ENCODE measurements at regions of chr13 and their contacts with region 1.

Region 1: GRCh38 chr13:99356158-99357091 is 49.2 kb upstream of the GPR183 start:
- DNase-seq: peak; percentile 88 to 95 (median 92)
- H3K4me3 ChIP-seq: peak overlapping the region; percentile 13 to 37
- H3K4me3 Mint-ChIP-seq: peak overlapping the region; percentile 30 to 82 (median 73)
- H3K27ac ChIP-seq: peak overlapping the region; percentile 94
- H3K27ac Mint-ChIP-seq: peak overlapping the region; percentile 96 to 100 (median 99)
- H3K4me1 ChIP-seq: peaks cover 98% of the 10 kb centered on the region
- H3K4me1 Mint-ChIP-seq: peaks cover 90 to 100% (median 96%) of the 10 kb centered on the region in 4 donors
- H3K27me3 ChIP-seq: no peaks in the 10 kb centered on the region
- H3K27me3 Mint-ChIP-seq: no peaks in the 10 kb centered on the region

Region 2: GRCh38 chr13:99275093-99275469 is 81.3 kb before region 1 on chr13:
- CTCF ChIA-PET with region 1: interaction called, 42 read pairs
- POLR2A ChIA-PET with region 1: interaction called, 55 read pairs
- intact Hi-C with region 1: no loop called
- DNase-seq: peak; percentile 46 to 67 (median 54)
- H3K4me3 ChIP-seq: peak overlapping the region in 1 of 2 donors; percentile 3
- H3K4me3 Mint-ChIP-seq: peak overlapping the region in 7 of 8 donors; percentile 43 to 86 (median 74)
- H3K27ac ChIP-seq: peak overlapping the region; percentile 11
- H3K27ac Mint-ChIP-seq: peak overlapping the region; percentile 80 to 98 (median 94)
- H3K4me1 ChIP-seq: peaks cover 93% of the 10 kb centered on the region
- H3K4me1 Mint-ChIP-seq: peaks cover 79 to 99% (median 89%) of the 10 kb centered on the region in 4 donors
- H3K27me3 ChIP-seq: no peaks in the 10 kb centered on the region
- H3K27me3 Mint-ChIP-seq: no peaks in the 10 kb centered on the region

Region 3: GRCh38 chr13:99296398-99296797 is 60.0 kb before region 1 on chr13:
- CTCF ChIA-PET with region 1: interaction called, 7 read pairs
- POLR2A ChIA-PET with region 1: interaction called, 929 read pairs
- intact Hi-C with region 1: no loop called
- DNase-seq: peak; percentile 46 to 69 (median 59)
- H3K4me3 ChIP-seq: peak overlapping the region in 1 of 2 donors; percentile 8
- H3K4me3 Mint-ChIP-seq: peak overlapping the region; percentile 76 to 87 (median 86)
- H3K27ac ChIP-seq: peak overlapping the region; percentile 66
- H3K27ac Mint-ChIP-seq: peak overlapping the region; percentile 86 to 96 (median 94)
- H3K4me1 ChIP-seq: peaks cover 94% of the 10 kb centered on the region
- H3K4me1 Mint-ChIP-seq: peaks cover 58 to 92% (median 70%) of the 10 kb centered on the region in 4 donors
- H3K27me3 ChIP-seq: no peaks in the 10 kb centered on the region
- H3K27me3 Mint-ChIP-seq: no peaks in the 10 kb centered on the region

Region 4: DNA sequence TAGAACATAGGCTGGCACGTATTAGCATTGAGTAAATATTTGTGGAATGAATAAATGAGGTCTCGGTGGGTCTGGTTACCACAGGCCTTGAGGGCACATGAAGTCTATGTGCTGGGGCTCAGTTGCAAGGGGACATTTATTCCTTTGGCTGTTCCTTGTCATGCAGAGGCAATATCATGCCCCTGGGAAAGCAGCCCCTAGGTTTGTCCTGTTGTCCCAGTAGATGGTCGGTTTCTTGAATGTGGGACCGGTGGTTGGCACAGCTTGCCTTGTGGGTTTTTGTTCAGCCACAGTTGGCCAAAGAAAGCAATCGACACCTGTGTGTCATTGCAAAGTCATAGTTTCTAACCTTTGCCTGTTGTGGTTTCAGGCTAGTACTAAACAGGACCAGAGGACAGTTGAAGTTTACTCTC is 24.5 kb before region 1 on chr13:
- CTCF ChIA-PET with region 1: interaction called, 17 read pairs
- POLR2A ChIA-PET with region 1: interaction called, 21 read pairs
- intact Hi-C with region 1: no loop called
- DNase-seq: no peak
- H3K4me3 ChIP-seq: no peak overlapping the region
- H3K4me3 Mint-ChIP-seq: peak overlapping the region in 1 of 8 donors; percentile 16
- H3K27ac ChIP-seq: no peak overlapping the region
- H3K27ac Mint-ChIP-seq: peak overlapping the region in 1 of 7 donors; percentile 51
- H3K4me1 ChIP-seq: peaks cover 42% of the 10 kb centered on the region
- H3K4me1 Mint-ChIP-seq: peaks cover 34 to 69% (median 52%) of the 10 kb centered on the region in 4 donors
- H3K27me3 ChIP-seq: no peaks in the 10 kb centered on the region
- H3K27me3 Mint-ChIP-seq: no peaks in the 10 kb centered on the region

Region 5: GRCh38 chr13:99374994-99375737 is 18.7 kb after region 1 on chr13:
- CTCF ChIA-PET with region 1: interaction called, 46 read pairs
- POLR2A ChIA-PET with region 1: interaction called, 235 read pairs
- intact Hi-C with region 1: loop called (anchors 1 kb)
- DNase-seq: peak; percentile 73 to 89 (median 82)
- H3K4me3 ChIP-seq: peak overlapping the region in 1 of 2 donors; percentile 15
- H3K4me3 Mint-ChIP-seq: peak overlapping the region; percentile 61 to 77 (median 68)
- H3K27ac ChIP-seq: peak overlapping the region; percentile 39
- H3K27ac Mint-ChIP-seq: peak overlapping the region; percentile 96 to 100 (median 98)
- H3K4me1 ChIP-seq: peaks cover 85% of the 10 kb centered on the region
- H3K4me1 Mint-ChIP-seq: peaks cover 58 to 95% (median 79%) of the 10 kb centered on the region in 4 donors
- H3K27me3 ChIP-seq: no peaks in the 10 kb centered on the region
- H3K27me3 Mint-ChIP-seq: no peaks in the 10 kb centered on the region